Left colon (tissue), 2 donors: ENCODE measurements at regions of chr21 and their contacts with region 1.

Region 1: DNA sequence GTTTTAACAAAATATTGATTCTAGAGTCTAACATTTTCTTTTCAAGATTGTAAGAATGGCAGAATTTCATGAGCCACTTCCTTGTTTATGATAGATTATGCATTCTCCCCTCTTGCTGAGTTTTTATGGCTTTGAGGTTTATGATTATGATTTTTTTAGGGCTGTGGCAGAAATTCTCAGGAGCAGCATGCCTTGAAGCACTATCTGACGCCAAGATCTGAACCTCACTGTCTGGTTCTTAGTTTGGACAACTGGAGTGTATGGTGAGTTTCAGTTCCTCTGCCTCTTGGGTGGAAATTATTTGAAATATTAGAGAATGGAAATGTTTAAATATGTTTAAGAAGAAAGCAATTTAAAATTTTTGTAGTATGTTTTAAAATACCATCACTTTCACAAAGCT is 10.2 kb downstream of the USP16 start:
- DNase-seq: no peak
- ATAC-seq: peak; percentile 90

Region 2: GRCh38 chr21:28899744-28900143 is 134.9 kb before region 1 on chr21:
- intact Hi-C with region 1: no loop called
- DNase-seq: no peak
- ATAC-seq: no peak

Region 3: DNA sequence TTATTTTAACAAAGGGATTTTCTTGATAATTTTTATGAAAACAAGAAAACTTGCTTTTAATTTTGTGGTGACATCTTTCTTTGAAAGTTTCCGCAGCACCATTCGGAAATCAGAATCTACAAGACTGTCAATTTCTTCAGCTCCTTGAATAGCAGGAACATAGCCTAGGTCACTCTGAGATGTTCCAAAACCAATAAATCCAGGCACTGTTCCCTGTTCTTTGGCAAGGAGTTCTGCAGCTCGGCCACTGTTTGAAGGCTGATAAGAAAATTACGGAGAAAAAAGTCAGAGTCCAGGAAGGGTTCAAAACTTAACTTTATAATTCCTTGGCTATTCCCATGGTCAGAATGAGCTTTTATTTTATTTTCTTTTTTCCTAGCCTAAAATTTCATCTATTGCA is 48.0 kb before region 1 on chr21:
- intact Hi-C with region 1: loop called in 1 of 2 experiments (anchors 10 kb)
- DNase-seq: no peak
- ATAC-seq: no peak